Activated naive CD4-positive, alpha-beta T cell treated with anti-CD3 and anti-CD28 coated beads, Interleukin-2, amount 10 ng/mL, durations not matched to agents 7 days and 5 days (primary cell): ENCODE measurements at regions of chr22 and their contacts with region 1.

Region 1: DNA sequence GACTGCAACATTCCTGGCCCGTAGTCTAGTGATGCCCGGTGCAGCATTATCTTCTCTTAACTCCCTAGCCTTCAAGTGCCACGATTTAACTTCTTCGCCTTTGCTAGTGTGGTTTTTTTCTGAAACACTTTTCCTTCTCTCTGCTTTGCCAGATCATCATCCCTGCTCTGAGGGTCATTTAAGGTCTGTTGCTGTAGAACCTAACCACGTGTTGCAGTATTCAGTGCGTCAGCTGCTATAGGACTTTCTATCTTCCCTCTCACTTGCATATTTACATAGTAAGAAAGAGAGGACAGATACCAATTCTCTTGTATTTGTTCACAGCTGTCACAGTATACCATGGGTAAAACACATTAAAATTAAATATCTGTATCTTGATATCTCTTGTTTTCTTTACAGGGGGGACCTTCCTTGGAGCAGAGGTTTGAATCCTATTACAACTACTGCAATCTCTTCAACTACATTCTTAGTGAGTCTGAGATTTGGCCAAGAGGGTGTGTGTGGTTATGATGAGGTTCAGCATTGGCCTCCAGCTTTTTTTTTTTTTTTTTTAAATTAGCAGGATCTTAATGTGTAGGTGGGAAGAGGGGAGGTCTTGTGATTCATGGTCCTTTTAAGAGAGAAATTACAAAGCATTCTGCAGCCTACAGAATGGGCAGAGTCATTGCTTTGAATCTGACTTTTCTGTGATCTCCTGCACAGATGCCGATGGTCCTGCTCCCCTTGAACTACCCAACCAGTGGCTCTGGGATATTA is 13.5 kb downstream of the EIF3L start:
- DNase-seq: no peak
- H3K4me3 Mint-ChIP-seq: no peak overlapping the region
- H3K27ac Mint-ChIP-seq: peak overlapping the region; percentile 13
- H3K4me1 Mint-ChIP-seq: peaks cover 7% of the 10 kb centered on the region
- H3K27me3 Mint-ChIP-seq: no peaks in the 10 kb centered on the region

Region 2: DNA sequence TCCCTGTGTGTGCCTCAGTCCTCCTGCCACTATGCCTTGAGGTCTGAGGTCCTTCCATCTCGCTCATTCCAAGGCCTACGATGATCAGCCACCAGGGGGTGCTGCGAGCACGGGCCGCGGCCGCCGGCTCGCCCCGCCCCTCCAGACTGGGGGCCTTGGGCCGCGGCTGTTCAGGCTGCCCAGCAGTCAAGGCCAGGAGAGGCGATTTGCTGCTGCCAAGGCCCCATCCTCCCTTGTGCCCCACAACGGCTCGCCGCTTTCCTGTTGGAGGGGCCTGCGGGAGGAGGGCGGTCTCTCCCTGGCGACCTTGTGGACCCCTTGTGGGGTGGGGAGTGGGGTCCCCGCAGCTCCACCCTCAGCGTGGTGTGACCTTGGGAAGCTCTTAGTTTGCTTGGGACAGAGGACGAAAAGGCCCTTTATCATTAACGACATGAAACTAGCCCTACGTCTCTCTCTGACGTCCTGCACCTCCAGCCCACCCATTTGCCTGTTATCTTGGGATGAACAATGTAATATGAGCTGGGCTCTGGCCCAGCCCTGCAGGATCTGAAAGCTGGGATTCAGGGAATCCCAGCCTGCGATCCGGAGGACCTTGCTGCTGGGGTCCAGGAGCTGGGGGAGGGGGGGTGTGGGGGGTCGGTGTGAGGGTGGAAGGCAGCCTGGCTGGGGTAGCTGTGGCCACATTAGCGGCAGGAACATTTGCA is 44.9 kb before region 1 on chr22:
- CTCF ChIA-PET with region 1: interaction called, 98 read pairs
- DNase-seq: peak; percentile 84
- H3K4me3 Mint-ChIP-seq: peak overlapping the region; percentile 15
- H3K27ac Mint-ChIP-seq: no peak overlapping the region
- H3K4me1 Mint-ChIP-seq: peaks cover 18% of the 10 kb centered on the region
- H3K27me3 Mint-ChIP-seq: peaks cover 56% of the 10 kb centered on the region

Region 3: DNA sequence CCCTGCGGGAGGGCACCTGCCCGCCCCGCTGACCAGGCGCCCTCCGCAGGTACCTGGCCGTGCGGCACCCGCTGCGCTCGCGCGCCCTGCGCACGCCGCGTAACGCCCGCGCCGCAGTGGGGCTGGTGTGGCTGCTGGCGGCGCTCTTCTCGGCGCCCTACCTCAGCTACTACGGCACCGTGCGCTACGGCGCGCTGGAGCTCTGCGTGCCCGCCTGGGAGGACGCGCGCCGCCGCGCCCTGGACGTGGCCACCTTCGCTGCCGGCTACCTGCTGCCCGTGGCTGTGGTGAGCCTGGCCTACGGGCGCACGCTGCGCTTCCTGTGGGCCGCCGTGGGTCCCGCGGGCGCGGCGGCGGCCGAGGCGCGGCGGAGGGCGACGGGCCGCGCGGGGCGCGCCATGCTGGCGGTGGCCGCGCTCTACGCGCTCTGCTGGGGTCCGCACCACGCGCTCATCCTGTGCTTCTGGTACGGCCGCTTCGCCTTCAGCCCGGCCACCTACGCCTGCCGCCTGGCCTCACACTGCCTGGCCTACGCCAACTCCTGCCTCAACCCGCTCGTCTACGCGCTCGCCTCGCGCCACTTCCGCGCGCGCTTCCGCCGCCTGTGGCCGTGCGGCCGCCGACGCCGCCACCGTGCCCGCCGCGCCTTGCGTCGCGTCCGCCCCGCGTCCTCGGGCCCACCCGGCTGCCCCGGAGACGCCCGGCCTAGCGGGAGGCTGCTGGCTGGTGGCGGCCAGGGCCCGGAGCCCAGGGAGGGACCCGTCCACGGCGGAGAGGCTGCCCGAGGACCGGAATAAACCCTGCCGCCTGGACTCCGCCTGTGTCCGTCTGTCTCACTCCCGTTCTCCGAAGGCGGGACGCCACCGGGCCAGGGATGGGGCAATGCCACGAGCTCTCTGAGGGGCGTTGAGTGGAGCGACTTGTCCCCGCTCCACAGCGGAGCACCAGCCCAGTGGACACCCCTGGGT is 37.8 kb before region 1 on chr22:
- CTCF ChIA-PET with region 1: interaction called, 98 read pairs
- DNase-seq: peak; percentile 56
- H3K4me3 Mint-ChIP-seq: peak overlapping the region; percentile 71
- H3K27ac Mint-ChIP-seq: no peak overlapping the region
- H3K4me1 Mint-ChIP-seq: peaks cover 14% of the 10 kb centered on the region
- H3K27me3 Mint-ChIP-seq: peaks cover 55% of the 10 kb centered on the region

Region 4: GRCh38 chr22:37849089-37849751 is 13.5 kb before region 1 on chr22 and contains the start of gene EIF3L:
- CTCF ChIA-PET with region 1: interaction called, 27 read pairs
- DNase-seq: peak; percentile 93
- H3K4me3 Mint-ChIP-seq: peak within 1 kb of the TSS; percentile 83
- H3K27ac Mint-ChIP-seq: peak within 1 kb of the TSS; percentile 95
- H3K4me1 Mint-ChIP-seq: peaks cover 52% of the 10 kb centered on the region
- H3K27me3 Mint-ChIP-seq: no peaks in the 10 kb centered on the region

Region 5: GRCh38 chr22:37933711-37934376 is 71.1 kb after region 1 on chr22:
- CTCF ChIA-PET with region 1: interaction called, 19 read pairs
- DNase-seq: peak; percentile 92
- H3K4me3 Mint-ChIP-seq: no peak overlapping the region
- H3K27ac Mint-ChIP-seq: peak overlapping the region; percentile 11
- H3K4me1 Mint-ChIP-seq: peaks cover 17% of the 10 kb centered on the region
- H3K27me3 Mint-ChIP-seq: no peaks in the 10 kb centered on the region

Region 6: GRCh38 chr22:38017272-38017920 is 154.6 kb after region 1 on chr22:
- CTCF ChIA-PET with region 1: no interaction called
- DNase-seq: no peak
- H3K4me3 Mint-ChIP-seq: no peak overlapping the region
- H3K27ac Mint-ChIP-seq: no peak overlapping the region
- H3K4me1 Mint-ChIP-seq: no peaks in the 10 kb centered on the region
- H3K27me3 Mint-ChIP-seq: peaks cover 10% of the 10 kb centered on the region

Region 7: DNA sequence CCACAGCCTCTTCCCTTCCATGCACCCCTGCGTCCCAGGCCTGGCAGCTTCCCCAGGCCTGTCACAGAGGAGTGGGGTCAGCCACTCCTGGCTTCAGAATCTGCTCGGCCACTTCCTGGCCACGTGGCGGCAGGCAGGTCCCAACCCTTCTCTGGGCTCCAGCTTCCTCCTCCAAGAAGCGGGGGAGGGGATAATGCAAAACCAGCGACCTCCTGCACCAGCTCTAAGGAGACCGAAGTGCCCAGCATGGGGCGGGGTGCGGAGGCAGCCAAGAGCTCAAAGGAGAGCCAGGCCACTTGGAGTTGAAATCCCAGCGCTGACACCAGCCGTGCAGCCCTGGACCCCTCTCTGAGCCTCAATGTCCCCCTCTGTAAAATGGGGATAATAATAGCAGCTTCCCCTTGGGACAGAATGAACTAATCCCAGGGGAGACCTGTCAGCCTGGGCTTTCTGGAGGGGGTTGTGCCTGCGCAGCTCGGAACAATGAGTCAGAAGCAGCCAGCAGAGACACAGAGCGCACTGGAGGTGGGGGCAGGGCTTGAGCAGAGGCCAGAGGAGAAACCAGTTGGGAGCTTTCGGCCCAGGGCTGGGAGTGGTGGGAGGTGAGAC is 171.6 kb after region 1 on chr22:
- CTCF ChIA-PET with region 1: no interaction called
- DNase-seq: no peak
- H3K4me3 Mint-ChIP-seq: no peak overlapping the region
- H3K27ac Mint-ChIP-seq: no peak overlapping the region
- H3K4me1 Mint-ChIP-seq: no peaks in the 10 kb centered on the region
- H3K27me3 Mint-ChIP-seq: peaks cover 6% of the 10 kb centered on the region